ENCODE measurements at regions of chr13 and their contacts with region 1.

Region 1: DNA sequence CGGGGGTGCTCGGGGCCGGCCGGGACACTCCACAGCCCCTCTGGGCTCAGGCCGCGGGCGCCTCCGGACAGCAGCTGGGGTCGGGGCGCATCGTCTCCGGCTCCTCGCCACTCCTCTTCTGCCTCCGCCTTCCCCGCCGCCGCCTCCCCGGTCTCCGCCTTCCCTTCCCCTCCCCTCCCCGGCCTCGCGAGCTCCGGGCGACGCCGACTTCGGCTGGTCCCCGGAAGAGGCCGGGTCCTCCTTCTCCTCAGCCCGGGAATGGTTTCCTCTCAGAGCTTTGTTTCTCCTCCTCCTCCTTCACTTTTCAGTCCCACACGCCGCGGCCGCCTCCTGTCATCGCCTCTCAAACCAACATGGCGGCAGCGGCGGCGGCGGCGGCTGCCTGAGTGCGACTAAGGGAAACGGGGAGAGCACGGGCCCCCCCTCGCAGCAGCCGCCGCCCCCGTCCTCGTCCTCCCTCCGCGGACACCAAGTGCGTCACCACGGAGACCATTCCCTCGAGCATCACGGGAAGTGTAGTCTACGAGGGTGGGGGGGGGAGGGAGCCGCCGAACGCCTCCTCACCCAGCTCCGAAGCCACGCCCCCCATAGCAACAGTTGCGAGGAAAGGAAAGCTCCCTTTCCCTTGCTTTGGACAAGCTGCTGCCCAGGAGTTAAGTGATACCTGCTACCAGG is at the start of gene UBL3:
- DNase-seq: peak; percentile 62
- ATAC-seq: peak; percentile 84
- H3K4me3 ChIP-seq: peak within 1 kb of the TSS; percentile 77
- H3K27ac ChIP-seq: peak within 1 kb of the TSS; percentile 54
- H3K4me1 ChIP-seq: no peaks in the 10 kb centered on the region
- H3K27me3 ChIP-seq: no peaks in the 10 kb centered on the region
- CTCF ChIP-seq: no peak
- EP300 ChIP-seq: no peak
- POLR2A ChIP-seq: peak; percentile 87
- RAD21 ChIP-seq: no peak
- polyA plus RNA-seq, gene UBL3: 5.5 to 6.1 TPM

Region 2: GRCh38 chr13:29595380-29596063 is 254.8 kb before region 1 on chr13 and contains the start of gene SLC7A1:
- CTCF ChIA-PET with region 1: no interaction called
- POLR2A ChIA-PET with region 1: no interaction called
- RAD21 ChIA-PET with region 1: no interaction called
- SMC1A ChIA-PET with region 1: no interaction called
- in situ Hi-C with region 1: no loop called
- intact Hi-C with region 1: loop called (anchors 10 kb)
- DNase-seq: peak; percentile 43
- ATAC-seq: peak; percentile 85
- H3K4me3 ChIP-seq: peak within 1 kb of the TSS; percentile 70
- H3K27ac ChIP-seq: peak within 1 kb of the TSS; percentile 96
- H3K4me1 ChIP-seq: peaks cover 3% of the 10 kb centered on the region; the same call in 1 of the 2 replicates
- H3K27me3 ChIP-seq: no peaks in the 10 kb centered on the region
- CTCF ChIP-seq: 0 out of 6 replicates have a peak, but pooled peaks of 1 of the 3 experiments have one; percentile 16
- EP300 ChIP-seq: no peak
- POLR2A ChIP-seq: peak; percentile 72
- RAD21 ChIP-seq: 0 out of 2 replicates have a peak, but pooled peaks have one; percentile 8
- polyA plus RNA-seq, gene SLC7A1: 6.4 to 7.6 TPM

Region 3: DNA sequence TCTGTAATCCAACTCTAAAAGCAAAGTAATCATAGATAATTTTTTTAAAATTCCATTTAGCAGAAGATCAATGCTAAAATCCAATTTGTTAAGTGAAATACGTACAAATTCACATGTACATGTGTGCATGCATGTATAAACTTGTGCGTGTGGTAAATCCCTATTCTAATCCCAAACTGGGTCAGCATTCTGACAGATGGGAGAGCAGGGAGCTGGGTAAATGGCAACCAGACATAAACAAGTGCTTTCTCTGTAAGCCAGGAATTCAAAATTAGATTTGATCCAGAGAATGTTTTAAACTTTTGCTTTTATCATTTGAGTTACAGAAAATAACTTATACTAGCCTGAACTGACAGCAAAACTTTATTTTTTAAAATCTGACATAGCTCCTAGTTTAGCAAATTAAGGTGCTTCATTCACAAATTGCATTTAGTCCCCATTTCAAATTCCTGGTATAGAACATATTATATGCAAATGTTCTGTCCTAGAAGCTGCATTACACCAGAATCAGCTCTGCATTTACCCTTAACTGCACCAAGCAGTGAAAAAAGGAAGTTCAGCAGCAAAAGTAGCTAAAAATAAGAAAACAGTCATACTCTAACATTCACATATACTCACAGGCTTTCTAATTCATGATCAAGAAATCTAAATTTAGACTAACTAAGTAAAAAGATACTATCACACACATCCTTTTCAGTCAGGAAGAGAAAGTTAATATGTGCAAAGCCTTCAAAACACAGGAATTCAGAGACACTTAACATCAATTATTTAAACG is 32.6 kb before region 1 on chr13:
- CTCF ChIA-PET with region 1: interaction called, 25 read pairs
- POLR2A ChIA-PET with region 1: interaction called, 19 read pairs
- RAD21 ChIA-PET with region 1: interaction called, 84 read pairs
- SMC1A ChIA-PET with region 1: interaction called, 181 read pairs
- in situ Hi-C with region 1: no loop called
- intact Hi-C with region 1: no loop called
- DNase-seq: peak; percentile 69
- ATAC-seq: peak; percentile 97
- H3K4me3 ChIP-seq: peak overlapping the region; percentile 46; the same call in 1 of the 2 replicates
- H3K27ac ChIP-seq: peak overlapping the region; percentile 87
- H3K4me1 ChIP-seq: peaks cover 23% of the 10 kb centered on the region; the same call in 1 of the 2 replicates
- H3K27me3 ChIP-seq: no peaks in the 10 kb centered on the region
- CTCF ChIP-seq: no peak
- EP300 ChIP-seq: peak; percentile 38 to 54; a peak in 2 of 4 replicates
- POLR2A ChIP-seq: no peak
- RAD21 ChIP-seq: 0 out of 2 replicates have a peak, but pooled peaks have one; percentile 12

Region 4: DNA sequence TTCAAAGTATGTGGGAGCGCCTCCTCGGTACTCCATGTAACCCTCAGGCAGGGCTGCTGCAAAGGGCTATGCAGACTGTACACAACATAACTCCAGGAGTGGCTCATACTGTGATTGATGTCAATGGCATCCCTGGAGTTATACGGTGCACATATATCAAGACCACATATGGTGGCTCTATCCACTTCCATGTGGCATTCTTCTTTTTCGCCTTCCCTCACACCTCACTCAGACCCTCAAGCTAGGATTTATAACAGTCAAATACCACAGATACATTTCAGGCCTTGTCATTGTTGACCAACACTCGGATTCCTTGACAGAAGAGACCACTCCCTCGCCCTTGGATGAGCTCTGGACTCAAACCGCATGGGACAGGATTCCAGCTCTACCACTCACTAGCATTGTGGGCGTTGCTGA is 11.3 kb after region 1 on chr13:
- CTCF ChIA-PET with region 1: no interaction called
- POLR2A ChIA-PET with region 1: no interaction called
- RAD21 ChIA-PET with region 1: no interaction called
- SMC1A ChIA-PET with region 1: no interaction called
- in situ Hi-C with region 1: no loop called
- intact Hi-C with region 1: no loop called
- DNase-seq: no peak
- ATAC-seq: no peak
- H3K4me3 ChIP-seq: no peak overlapping the region
- H3K27ac ChIP-seq: no peak overlapping the region
- H3K4me1 ChIP-seq: no peaks in the 10 kb centered on the region
- H3K27me3 ChIP-seq: peaks cover 0 to 2% of the 10 kb centered on the region in 2 experiments; a peak in 2 of 4 replicates
- CTCF ChIP-seq: no peak
- EP300 ChIP-seq: no peak
- POLR2A ChIP-seq: no peak
- RAD21 ChIP-seq: no peak

Region 5: DNA sequence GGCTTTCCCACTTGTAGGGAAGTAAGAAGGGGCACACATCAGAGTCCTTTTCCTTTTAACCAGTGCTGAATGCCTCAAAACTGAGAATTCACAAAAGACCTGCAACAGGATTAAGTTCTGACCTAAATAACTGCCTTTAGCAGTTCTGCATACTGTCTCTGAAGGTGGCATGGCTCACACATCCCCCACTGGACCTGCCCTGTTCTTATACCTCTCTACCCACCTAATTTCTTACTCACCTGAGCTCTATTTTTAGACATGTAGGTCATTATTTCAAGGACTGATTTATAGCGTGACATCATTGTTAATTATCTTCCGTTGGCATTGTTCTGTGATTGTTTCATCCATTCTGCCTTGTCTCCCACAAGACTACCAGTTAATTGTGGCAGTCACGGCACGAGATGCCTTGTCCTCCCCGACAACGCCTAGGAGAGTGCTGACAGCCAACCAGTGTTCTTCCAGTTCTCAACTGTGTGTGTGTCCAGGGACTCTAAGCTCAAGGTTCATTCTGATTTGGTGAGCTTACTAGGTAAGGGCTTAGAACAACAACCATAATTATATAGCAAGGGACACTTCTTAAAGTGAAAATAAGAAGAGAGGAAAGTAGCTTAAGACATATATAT is 27.2 kb after region 1 on chr13:
- CTCF ChIA-PET with region 1: no interaction called
- POLR2A ChIA-PET with region 1: no interaction called
- RAD21 ChIA-PET with region 1: no interaction called
- SMC1A ChIA-PET with region 1: no interaction called
- in situ Hi-C with region 1: no loop called
- intact Hi-C with region 1: no loop called
- DNase-seq: no peak
- ATAC-seq: no peak
- H3K4me3 ChIP-seq: no peak overlapping the region
- H3K27ac ChIP-seq: no peak overlapping the region
- H3K4me1 ChIP-seq: no peaks in the 10 kb centered on the region
- H3K27me3 ChIP-seq: peaks cover 0 to 2% of the 10 kb centered on the region in 2 experiments; a peak in 2 of 4 replicates
- CTCF ChIP-seq: no peak
- EP300 ChIP-seq: no peak
- POLR2A ChIP-seq: no peak
- RAD21 ChIP-seq: no peak

Region 6: GRCh38 chr13:29908416-29908815 is 58.1 kb after region 1 on chr13:
- CTCF ChIA-PET with region 1: no interaction called
- POLR2A ChIA-PET with region 1: no interaction called
- RAD21 ChIA-PET with region 1: no interaction called
- SMC1A ChIA-PET with region 1: no interaction called
- in situ Hi-C with region 1: no loop called
- intact Hi-C with region 1: loop called (anchors 5 kb)
- DNase-seq: no peak
- ATAC-seq: no peak
- H3K4me3 ChIP-seq: no peak overlapping the region
- H3K27ac ChIP-seq: no peak overlapping the region
- H3K4me1 ChIP-seq: peaks cover 11% of the 10 kb centered on the region; the same call in 1 of the 2 replicates
- H3K27me3 ChIP-seq: no peaks in the 10 kb centered on the region; a peak in 1 of 4 replicates
- CTCF ChIP-seq: no peak
- EP300 ChIP-seq: no peak
- POLR2A ChIP-seq: no peak
- RAD21 ChIP-seq: no peak

Region 7: GRCh38 chr13:29935309-29935981 is 85.1 kb after region 1 on chr13:
- CTCF ChIA-PET with region 1: interaction called, 6 read pairs
- POLR2A ChIA-PET with region 1: no interaction called
- RAD21 ChIA-PET with region 1: interaction called, 8 read pairs
- SMC1A ChIA-PET with region 1: interaction called, 7 read pairs
- in situ Hi-C with region 1: no loop called
- intact Hi-C with region 1: loop called (anchors 5 kb)
- DNase-seq: peak; percentile 74
- ATAC-seq: peak; percentile 91
- H3K4me3 ChIP-seq: peak overlapping the region; percentile 50; the same call in 1 of the 2 replicates
- H3K27ac ChIP-seq: no peak overlapping the region
- H3K4me1 ChIP-seq: peaks cover 20% of the 10 kb centered on the region
- H3K27me3 ChIP-seq: no peaks in the 10 kb centered on the region
- CTCF ChIP-seq: no peak
- EP300 ChIP-seq: peak; percentile 74 to 75; a peak in 3 of 4 replicates
- POLR2A ChIP-seq: no peak
- RAD21 ChIP-seq: no peak

Region 8: GRCh38 chr13:29946093-29946492 is 95.7 kb after region 1 on chr13:
- CTCF ChIA-PET with region 1: no interaction called
- POLR2A ChIA-PET with region 1: no interaction called
- RAD21 ChIA-PET with region 1: no interaction called
- SMC1A ChIA-PET with region 1: no interaction called
- in situ Hi-C with region 1: no loop called
- intact Hi-C with region 1: no loop called
- DNase-seq: no peak
- ATAC-seq: no peak
- H3K4me3 ChIP-seq: no peak overlapping the region
- H3K27ac ChIP-seq: no peak overlapping the region
- H3K4me1 ChIP-seq: no peaks in the 10 kb centered on the region
- H3K27me3 ChIP-seq: no peaks in the 10 kb centered on the region; a peak in 1 of 4 replicates
- CTCF ChIP-seq: no peak
- EP300 ChIP-seq: no peak
- POLR2A ChIP-seq: no peak
- RAD21 ChIP-seq: no peak